ENCODE measurements at regions of chr16 and their contacts with region 1.

Region 1: DNA sequence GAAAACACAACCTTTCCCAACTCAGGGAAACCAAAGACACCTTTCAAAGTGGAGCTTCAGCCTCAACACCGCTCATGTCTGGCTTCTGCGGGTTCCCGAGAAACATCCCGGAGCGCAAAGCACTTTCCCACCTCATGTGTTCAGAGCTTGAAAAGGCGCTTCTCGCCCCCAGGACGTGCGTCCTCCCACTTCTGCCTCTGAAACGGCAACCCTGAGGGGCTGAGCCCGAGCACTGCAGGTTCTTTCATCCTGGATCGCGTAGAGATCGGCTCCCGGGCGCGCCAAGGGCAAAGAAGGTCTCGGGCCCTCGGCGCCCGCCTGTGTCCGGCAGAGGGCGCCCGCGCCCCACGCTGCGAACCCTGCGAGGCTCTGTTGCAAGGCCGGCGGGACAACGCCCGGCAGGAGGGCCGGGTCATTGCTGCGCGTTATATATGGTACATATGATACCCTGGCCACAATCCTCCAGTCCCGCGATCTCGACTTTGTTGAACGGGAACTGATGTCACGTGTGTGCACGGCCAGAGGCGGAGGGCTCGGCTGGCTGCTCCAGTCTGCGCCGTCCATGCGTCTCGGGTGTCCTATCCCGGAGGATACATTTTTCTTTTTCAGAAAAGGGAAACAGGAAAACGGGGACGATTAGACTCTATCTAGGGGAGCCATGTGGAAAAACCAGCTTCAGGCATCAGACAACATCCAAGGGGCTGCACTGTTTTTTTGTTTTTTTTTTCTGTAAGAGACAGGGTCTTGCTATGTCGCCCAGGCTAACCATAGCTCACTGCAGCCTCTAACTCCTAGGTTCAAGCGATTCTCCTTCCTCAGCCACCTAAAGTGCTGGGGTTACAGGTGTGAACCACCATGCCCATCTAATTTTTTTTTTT is 19.1 kb downstream of the COQ7 start:
- DNase-seq: peak; percentile 92
- H3K4me3 ChIP-seq: peak overlapping the region; percentile 41 to 57
- H3K27ac ChIP-seq: no peak overlapping the region
- H3K4me1 ChIP-seq: peaks cover 6 to 8% of the 10 kb centered on the region in 2 experiments; a peak in 2 of 4 replicates
- H3K27me3 ChIP-seq: no peaks in the 10 kb centered on the region
- CTCF ChIP-seq: peak; percentile 95
- EP300 ChIP-seq: no peak
- RAD21 ChIP-seq: peak; percentile 97

Region 2: DNA sequence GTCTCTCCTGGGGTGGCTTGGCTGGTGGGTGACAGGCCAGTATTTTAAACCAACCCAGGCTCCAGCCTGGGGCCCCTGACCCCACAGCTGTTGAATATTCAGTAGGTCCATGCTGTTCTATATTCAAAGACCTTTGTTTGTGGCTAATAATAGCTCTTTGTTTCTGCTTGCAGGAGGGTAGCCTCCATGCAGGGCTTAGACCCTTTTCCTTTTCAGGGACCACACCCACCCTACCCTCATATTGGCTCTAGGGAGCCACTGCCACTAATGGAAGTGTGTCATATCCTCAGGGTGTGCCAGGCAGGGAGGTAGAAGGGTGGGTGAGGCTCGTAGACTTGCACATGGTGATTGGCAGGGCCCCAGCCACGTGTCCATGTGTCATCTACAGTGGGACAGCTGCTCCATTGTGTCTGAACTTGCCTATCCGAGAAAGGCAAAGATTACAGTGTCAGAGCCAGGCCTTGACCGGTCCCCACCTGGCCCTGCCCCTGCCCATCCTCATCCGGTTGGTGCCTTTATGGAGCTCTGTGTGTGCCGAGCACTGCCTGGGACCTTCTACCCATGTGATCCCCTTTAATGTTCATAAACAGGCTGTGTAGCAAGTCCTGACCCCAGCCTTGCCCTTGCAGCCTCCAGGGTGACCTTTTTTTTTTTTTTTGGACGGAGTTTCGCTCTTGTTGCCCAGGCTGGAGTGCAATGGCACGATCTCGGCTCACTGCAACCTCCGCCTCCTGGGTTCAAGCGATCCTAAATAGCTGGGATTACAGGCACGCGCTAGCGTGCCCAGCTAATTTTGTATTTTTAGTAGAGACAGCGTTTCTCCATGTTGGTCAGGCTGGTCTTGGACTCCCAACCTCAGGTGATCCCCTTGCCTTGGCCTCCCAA is 80.8 kb before region 1 on chr16:
- CTCF ChIA-PET with region 1: no interaction called
- POLR2A ChIA-PET with region 1: no interaction called
- DNase-seq: no peak
- H3K4me3 ChIP-seq: no peak overlapping the region
- H3K27ac ChIP-seq: no peak overlapping the region
- H3K4me1 ChIP-seq: peaks cover 0 to 4% of the 10 kb centered on the region in 2 experiments; a peak in 1 of 4 replicates
- H3K27me3 ChIP-seq: no peaks in the 10 kb centered on the region
- CTCF ChIP-seq: no peak
- EP300 ChIP-seq: no peak
- RAD21 ChIP-seq: no peak

Region 3: GRCh38 chr16:19067349-19068236 is 19.0 kb before region 1 on chr16 and contains the start of gene COQ7:
- CTCF ChIA-PET with region 1: interaction called, 16 read pairs
- POLR2A ChIA-PET with region 1: no interaction called
- DNase-seq: peak; percentile 95
- H3K4me3 ChIP-seq: peak within 1 kb of the TSS; percentile 74 to 94
- H3K27ac ChIP-seq: peak within 1 kb of the TSS; percentile 92 to 99
- H3K4me1 ChIP-seq: no peaks in the 10 kb centered on the region; a peak in 1 of 4 replicates
- H3K27me3 ChIP-seq: no peaks in the 10 kb centered on the region
- CTCF ChIP-seq: no peak
- EP300 ChIP-seq: no peak
- RAD21 ChIP-seq: no peak
- polyA plus RNA-seq, gene COQ7: 17.9 and 24.0 TPM in 2 replicates

Region 4: DNA sequence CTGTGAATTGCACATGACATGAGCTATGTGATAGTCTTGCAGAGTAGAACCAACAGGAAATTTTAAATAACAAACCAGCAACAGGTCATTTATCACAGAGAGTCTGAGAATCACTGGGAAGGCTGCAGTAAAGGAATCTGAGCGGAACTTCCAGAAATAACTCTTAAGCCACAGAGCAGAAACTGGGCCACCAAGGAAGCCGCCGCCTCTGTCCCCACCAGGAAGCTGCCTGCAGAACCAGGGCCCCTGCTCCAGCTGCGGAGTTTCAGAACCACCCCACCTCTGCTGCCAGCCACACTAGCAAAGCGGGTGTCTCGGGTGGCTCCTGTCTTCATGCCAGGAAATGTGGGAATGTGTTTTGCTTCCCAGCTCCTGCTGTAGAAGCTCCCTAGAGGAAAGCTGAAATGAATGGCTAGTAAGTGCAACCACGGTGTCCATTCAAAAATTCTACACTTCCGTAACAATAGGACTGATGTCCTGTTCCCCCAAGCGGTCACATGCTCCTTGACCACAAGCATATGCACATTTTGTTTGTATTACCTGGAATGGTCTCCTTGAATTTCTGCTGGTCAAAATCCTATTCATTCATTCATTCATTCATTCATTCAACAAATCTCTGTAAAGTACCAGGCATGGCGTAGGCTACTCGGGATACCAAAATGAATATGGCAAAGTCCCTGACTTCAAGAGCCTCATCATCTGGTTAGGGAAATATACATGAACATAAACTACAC is 19.5 kb after region 1 on chr16:
- CTCF ChIA-PET with region 1: interaction called, 35 read pairs
- POLR2A ChIA-PET with region 1: no interaction called
- DNase-seq: no peak
- H3K4me3 ChIP-seq: no peak overlapping the region
- H3K27ac ChIP-seq: no peak overlapping the region
- H3K4me1 ChIP-seq: no peaks in the 10 kb centered on the region
- H3K27me3 ChIP-seq: no peaks in the 10 kb centered on the region
- CTCF ChIP-seq: no peak
- EP300 ChIP-seq: no peak
- RAD21 ChIP-seq: no peak

Region 5: GRCh38 chr16:19138601-19139000 is 52.0 kb after region 1 on chr16:
- CTCF ChIA-PET with region 1: interaction called, 22 read pairs
- POLR2A ChIA-PET with region 1: no interaction called
- DNase-seq: peak; percentile 58
- H3K4me3 ChIP-seq: no peak overlapping the region
- H3K27ac ChIP-seq: no peak overlapping the region; a peak in 1 of 4 replicates
- H3K4me1 ChIP-seq: peaks cover 20 to 27% of the 10 kb centered on the region in 2 experiments; a peak in 3 of 4 replicates
- H3K27me3 ChIP-seq: no peaks in the 10 kb centered on the region
- CTCF ChIP-seq: no peak
- EP300 ChIP-seq: 0 out of 4 replicates have a peak, but pooled peaks of 1 of the 2 experiments have one; percentile 27
- RAD21 ChIP-seq: no peak

Region 6: DNA sequence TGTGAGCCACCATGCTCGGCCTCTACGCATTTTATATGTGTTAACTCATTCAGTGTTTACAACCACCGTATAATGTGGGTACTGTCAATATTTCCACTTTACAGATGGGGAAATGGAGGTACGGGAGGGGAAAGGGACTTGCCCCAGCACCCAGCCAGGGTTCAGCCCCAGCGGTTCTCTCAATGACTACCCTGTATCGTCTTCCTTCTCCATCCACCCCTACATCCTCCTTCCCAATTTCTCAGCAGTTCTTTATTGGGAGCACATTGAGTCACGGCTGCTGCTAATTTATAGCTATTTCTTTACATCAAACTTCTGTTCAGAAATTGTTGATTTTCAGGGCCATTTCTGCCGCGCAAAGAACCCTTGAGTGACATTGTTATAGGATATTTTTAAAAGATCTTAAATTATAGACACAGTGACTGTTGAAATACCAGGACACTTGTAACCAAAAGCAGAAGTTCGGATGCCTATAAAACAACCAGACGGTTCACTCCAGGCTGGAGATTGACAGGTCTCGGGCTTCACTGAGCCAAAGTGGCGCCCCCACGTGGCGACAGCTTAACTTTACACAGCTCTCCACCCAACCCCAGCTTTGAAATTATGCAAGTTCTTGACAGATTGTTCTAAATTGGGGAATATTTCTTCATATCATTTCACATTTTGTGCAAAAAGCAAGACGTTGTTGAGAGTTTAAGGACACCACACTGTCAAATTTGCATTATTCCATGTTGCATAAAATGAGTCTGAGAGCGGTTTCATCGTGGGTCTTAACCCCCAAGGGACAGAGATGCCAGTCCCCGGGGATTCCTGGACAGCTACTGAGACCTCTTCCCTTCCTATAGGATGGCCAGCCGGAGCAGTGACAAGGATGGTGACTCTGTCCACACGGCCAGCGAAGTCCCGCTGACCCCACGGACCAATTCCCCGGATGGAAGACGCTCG is 93.3 kb after region 1 on chr16:
- CTCF ChIA-PET with region 1: interaction called, 56 read pairs
- POLR2A ChIA-PET with region 1: no interaction called
- DNase-seq: peak; percentile 72
- H3K4me3 ChIP-seq: no peak overlapping the region; a peak in 1 of 4 replicates
- H3K27ac ChIP-seq: no peak overlapping the region
- H3K4me1 ChIP-seq: no peaks in the 10 kb centered on the region
- H3K27me3 ChIP-seq: no peaks in the 10 kb centered on the region; the same call in 1 of the 2 replicates
- CTCF ChIP-seq: peak; percentile 74
- EP300 ChIP-seq: no peak
- RAD21 ChIP-seq: peak; percentile 55

Region 7: DNA sequence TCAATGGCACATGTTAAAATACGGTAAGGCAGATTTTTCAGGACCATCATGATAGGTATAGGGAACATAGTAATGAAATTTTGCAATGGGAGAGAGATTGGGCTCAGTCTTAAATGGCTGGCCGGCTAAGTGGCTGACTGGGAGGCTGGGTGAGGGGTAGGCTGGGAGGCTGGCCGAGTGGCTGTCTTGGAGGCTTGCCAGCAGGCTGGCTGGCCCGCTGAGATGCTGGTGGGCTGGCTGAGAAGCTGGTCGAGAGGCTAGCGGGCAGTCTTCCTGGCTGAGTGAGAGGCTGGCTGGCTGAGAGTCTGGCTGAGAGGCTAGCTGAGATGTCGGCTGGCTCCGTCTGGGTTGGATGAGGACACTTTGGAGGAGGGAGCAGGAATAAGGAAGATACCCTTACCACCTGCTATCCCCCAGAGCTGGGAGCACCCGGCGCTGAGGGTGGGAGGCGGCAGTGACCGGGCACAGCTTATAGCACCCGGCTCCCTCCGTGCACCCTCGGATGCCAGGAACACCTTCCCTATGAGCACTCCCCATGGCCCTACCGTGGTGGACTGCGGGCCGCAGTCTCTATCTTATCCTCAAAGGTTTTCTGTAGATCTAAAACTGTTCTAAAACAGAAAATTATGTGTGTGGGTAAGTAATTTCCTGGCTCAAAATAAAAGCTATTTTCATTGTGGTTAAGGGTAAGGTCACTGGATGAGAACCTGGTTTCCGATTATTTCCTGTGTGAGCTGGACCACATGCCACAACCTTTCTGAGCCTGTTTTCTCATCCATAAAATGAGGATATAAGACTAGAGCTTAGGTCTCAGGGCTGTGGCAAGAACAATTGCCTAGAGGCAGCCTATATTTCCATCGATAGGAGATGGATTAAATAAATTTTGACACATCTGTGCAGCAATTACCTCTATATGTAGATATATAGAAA is 296.6 kb after region 1 on chr16:
- CTCF ChIA-PET with region 1: interaction called, 34 read pairs
- POLR2A ChIA-PET with region 1: no interaction called
- DNase-seq: peak; percentile 78
- H3K4me3 ChIP-seq: peak overlapping the region in 1 of 2 experiments; percentile 12; a peak in 1 of 4 replicates
- H3K27ac ChIP-seq: no peak overlapping the region
- H3K4me1 ChIP-seq: peaks cover 0 to 11% of the 10 kb centered on the region in 2 experiments; a peak in 1 of 4 replicates
- H3K27me3 ChIP-seq: no peaks in the 10 kb centered on the region
- CTCF ChIP-seq: no peak
- EP300 ChIP-seq: no peak
- RAD21 ChIP-seq: no peak

Measured in SK-N-SH (cell line).